HEK293 (cell line): ENCODE measurements at regions of chr11 and their contacts with region 1.

Region 1: GRCh38 chr11:45872513-45873356 is 12.7 kb upstream of the MAPK8IP1 start:
- H3K4me3 ChIP-seq: no peak overlapping the region
- H3K27ac ChIP-seq: no peak overlapping the region
- H3K4me1 ChIP-seq: no peaks in the 10 kb centered on the region
- CTCF ChIP-seq: peak; percentile 87

Region 2: GRCh38 chr11:45301537-45302246 is 571.0 kb before region 1 on chr11:
- CTCF ChIA-PET with region 1: no interaction called
- POLR2A ChIA-PET with region 1: no interaction called
- H3K4me3 ChIP-seq: no peak overlapping the region
- H3K27ac ChIP-seq: no peak overlapping the region
- H3K4me1 ChIP-seq: no peaks in the 10 kb centered on the region
- CTCF ChIP-seq: no peak

Region 3: GRCh38 chr11:45468262-45468856 is 404.4 kb before region 1 on chr11:
- CTCF ChIA-PET with region 1: no interaction called
- POLR2A ChIA-PET with region 1: no interaction called
- H3K4me3 ChIP-seq: no peak overlapping the region
- H3K27ac ChIP-seq: no peak overlapping the region
- H3K4me1 ChIP-seq: no peaks in the 10 kb centered on the region
- CTCF ChIP-seq: no peak

Region 4: GRCh38 chr11:45846974-45847910 is 25.5 kb before region 1 on chr11 and contains the start of gene CRY2:
- CTCF ChIA-PET with region 1: interaction called, 22 read pairs
- POLR2A ChIA-PET with region 1: no interaction called
- H3K4me3 ChIP-seq: peak within 1 kb of the TSS; percentile 96
- H3K27ac ChIP-seq: no peak within 1 kb of the TSS
- H3K4me1 ChIP-seq: no peaks in the 10 kb centered on the region
- CTCF ChIP-seq: 0 out of 2 replicates have a peak, but pooled peaks have one; percentile 9

Region 5: DNA sequence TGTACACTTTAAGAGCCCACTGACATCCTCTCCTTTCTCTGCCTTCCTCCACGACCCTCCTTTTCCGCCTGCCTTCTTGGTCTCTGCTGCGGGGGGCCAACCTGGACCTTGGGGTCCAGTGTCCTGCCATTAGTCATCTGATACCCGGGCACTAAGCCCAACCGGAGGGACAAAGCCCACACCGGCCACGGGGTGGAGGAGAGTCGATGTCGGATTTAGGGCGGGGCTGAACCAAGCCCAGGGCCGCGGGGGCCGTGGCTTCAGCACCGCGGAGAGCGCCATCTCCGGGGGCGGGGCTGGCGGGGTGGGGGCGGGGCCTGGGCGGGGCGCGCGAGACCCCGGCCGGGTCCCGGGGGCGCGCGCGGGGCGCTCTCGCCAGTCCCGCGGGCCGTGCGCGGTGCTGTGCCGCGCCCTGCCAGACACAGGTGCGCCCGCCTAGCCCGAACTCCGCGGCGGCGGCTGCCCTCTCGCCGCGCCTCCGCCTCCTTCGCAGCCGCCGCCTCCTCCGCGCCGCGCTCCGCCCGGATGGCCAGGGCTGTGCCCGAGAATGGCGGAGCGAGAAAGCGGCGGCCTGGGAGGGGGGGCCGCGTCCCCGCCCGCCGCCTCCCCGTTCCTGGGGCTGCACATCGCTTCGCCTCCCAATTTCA is 12.7 kb after region 1 on chr11 and contains the start of gene MAPK8IP1:
- CTCF ChIA-PET with region 1: interaction called, 20 read pairs
- POLR2A ChIA-PET with region 1: no interaction called
- H3K4me3 ChIP-seq: peak within 1 kb of the TSS; percentile 37
- H3K27ac ChIP-seq: no peak within 1 kb of the TSS; the same call in 1 of the 2 replicates
- H3K4me1 ChIP-seq: no peaks in the 10 kb centered on the region
- CTCF ChIP-seq: no peak

Region 6: GRCh38 chr11:45899448-45900173 is 26.9 kb after region 1 on chr11:
- CTCF ChIA-PET with region 1: interaction called, 19 read pairs
- POLR2A ChIA-PET with region 1: no interaction called
- H3K4me3 ChIP-seq: peak overlapping the region; percentile 60
- H3K27ac ChIP-seq: peak overlapping the region; percentile 56; the same call in 1 of the 2 replicates
- H3K4me1 ChIP-seq: peaks cover 4% of the 10 kb centered on the region; the same call in 1 of the 2 replicates
- CTCF ChIP-seq: no peak

Region 7: GRCh38 chr11:45949992-45950407 is 77.3 kb after region 1 on chr11:
- CTCF ChIA-PET with region 1: interaction called, 13 read pairs
- POLR2A ChIA-PET with region 1: no interaction called
- H3K4me3 ChIP-seq: no peak overlapping the region
- H3K27ac ChIP-seq: no peak overlapping the region
- H3K4me1 ChIP-seq: no peaks in the 10 kb centered on the region
- CTCF ChIP-seq: no peak

Region 8: GRCh38 chr11:46006418-46007070 is 133.8 kb after region 1 on chr11:
- CTCF ChIA-PET with region 1: interaction called, 79 read pairs
- POLR2A ChIA-PET with region 1: interaction called, 3 read pairs
- H3K4me3 ChIP-seq: no peak overlapping the region
- H3K27ac ChIP-seq: no peak overlapping the region
- H3K4me1 ChIP-seq: no peaks in the 10 kb centered on the region
- CTCF ChIP-seq: peak; percentile 25; the same call in 1 of the 2 replicates